ENCODE measurements at regions of chr3 and their contacts with region 1.

Region 1: DNA sequence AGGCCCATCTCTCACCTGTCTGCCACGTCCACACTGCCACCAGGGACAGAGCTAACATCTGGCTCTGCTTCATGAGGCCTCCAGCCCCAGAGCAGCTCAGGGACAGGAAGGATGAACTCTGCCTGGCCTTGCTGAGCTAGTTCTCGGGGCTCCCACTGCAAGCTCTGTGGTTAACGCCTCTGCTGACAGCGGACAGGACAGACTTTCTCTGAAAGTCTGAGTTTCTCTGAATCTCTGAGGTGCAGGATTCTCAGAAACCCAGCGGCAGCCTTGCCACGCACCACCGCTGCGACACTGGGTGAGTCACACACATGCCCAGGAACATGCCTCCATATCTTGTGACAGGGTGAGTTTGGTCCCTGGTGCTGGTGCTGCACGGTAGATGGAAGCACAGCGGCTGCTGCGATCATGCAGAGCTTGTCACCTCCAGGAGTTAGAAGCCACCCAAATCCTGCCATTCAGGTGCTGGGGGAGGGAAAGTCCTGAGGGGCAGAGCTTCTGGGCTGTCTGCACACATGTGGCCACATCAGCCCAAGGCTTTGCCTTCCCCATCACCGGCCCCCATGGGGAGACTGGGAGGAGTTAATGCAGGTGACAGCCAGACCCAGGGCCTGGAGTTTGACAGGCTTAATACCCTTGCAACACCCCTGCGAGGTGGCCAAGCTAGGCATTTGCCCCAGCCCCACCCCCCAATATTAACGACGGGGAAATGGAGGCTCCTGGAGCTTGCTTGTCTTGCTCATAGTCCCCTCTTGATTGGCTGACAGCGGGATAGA is 267.0 kb downstream of the PLCL2 start:
- DNase-seq: peak; percentile 27 to 81 (median 46)
- ATAC-seq: peak; percentile 87
- H3K4me3 ChIP-seq: peak overlapping the region; percentile 38
- H3K4me3 Mint-ChIP-seq: peak overlapping the region; percentile 38 to 86 (median 65)
- H3K27ac ChIP-seq: peak overlapping the region; percentile 45
- H3K27ac Mint-ChIP-seq: peak overlapping the region; percentile 41 to 95 (median 88)
- H3K4me1 ChIP-seq: peaks cover 18 to 33% of the 10 kb centered on the region in 2 donors
- H3K4me1 Mint-ChIP-seq: peaks cover 15 to 65% (median 28%) of the 10 kb centered on the region in 7 donors
- H3K27me3 ChIP-seq: no peaks in the 10 kb centered on the region
- H3K27me3 Mint-ChIP-seq: peaks cover 0 to 4% (median 0%) of the 10 kb centered on the region in 5 donors

Region 2: DNA sequence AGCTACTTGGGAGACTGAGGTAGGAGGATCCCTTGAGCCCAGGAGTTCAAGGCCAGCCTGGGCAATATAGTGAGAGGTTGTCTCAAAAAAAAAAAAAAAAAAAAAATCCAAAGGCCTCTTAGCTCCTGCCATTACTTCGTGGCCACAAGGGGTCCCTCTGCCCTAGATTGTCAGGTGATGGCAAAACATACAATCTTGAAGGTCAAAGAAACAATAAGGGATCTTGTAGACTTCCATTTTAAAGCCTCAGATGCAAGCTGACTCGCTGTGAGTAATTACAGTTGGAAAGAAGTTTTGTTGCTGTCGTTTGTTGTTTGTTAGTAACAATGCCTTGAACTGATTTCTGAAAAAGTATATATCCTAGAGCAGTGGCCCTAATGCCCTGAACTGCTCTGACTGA is 323.0 kb before region 1 on chr3:
- CTCF ChIA-PET with region 1: no interaction called
- POLR2A ChIA-PET with region 1: no interaction called
- intact Hi-C with region 1: loop called in 1 of 2 experiments (anchors 5 kb)
- DNase-seq: peak in 6 of 9 donors; percentile 29 to 59 (median 42)
- ATAC-seq: peak; percentile 80
- H3K4me3 ChIP-seq: no peak overlapping the region
- H3K4me3 Mint-ChIP-seq: no peak overlapping the region
- H3K27ac ChIP-seq: no peak overlapping the region
- H3K27ac Mint-ChIP-seq: peak overlapping the region in 3 of 9 donors; percentile 23 to 53 (median 42)
- H3K4me1 ChIP-seq: peaks cover 11 to 15% of the 10 kb centered on the region in 2 donors
- H3K4me1 Mint-ChIP-seq: peaks cover 16 to 37% (median 19%) of the 10 kb centered on the region in 7 donors
- H3K27me3 ChIP-seq: no peaks in the 10 kb centered on the region
- H3K27me3 Mint-ChIP-seq: peaks cover 0 to 20% (median 0%) of the 10 kb centered on the region in 5 donors

Region 3: GRCh38 chr3:17023006-17023664 is 128.7 kb before region 1 on chr3:
- CTCF ChIA-PET with region 1: no interaction called
- POLR2A ChIA-PET with region 1: no interaction called
- intact Hi-C with region 1: loop called in 1 of 2 experiments (anchors 2 kb)
- DNase-seq: peak in 4 of 9 donors; percentile 5 to 61 (median 34)
- ATAC-seq: peak; percentile 87
- H3K4me3 ChIP-seq: no peak overlapping the region
- H3K4me3 Mint-ChIP-seq: peak overlapping the region in 7 of 10 donors; percentile 27 to 72 (median 49)
- H3K27ac ChIP-seq: no peak overlapping the region
- H3K27ac Mint-ChIP-seq: peak overlapping the region; percentile 34 to 95 (median 79)
- H3K4me1 ChIP-seq: peaks cover 15 to 31% of the 10 kb centered on the region in 2 donors
- H3K4me1 Mint-ChIP-seq: peaks cover 34 to 87% (median 76%) of the 10 kb centered on the region in 7 donors
- H3K27me3 ChIP-seq: no peaks in the 10 kb centered on the region
- H3K27me3 Mint-ChIP-seq: no peaks in the 10 kb centered on the region

Region 4: DNA sequence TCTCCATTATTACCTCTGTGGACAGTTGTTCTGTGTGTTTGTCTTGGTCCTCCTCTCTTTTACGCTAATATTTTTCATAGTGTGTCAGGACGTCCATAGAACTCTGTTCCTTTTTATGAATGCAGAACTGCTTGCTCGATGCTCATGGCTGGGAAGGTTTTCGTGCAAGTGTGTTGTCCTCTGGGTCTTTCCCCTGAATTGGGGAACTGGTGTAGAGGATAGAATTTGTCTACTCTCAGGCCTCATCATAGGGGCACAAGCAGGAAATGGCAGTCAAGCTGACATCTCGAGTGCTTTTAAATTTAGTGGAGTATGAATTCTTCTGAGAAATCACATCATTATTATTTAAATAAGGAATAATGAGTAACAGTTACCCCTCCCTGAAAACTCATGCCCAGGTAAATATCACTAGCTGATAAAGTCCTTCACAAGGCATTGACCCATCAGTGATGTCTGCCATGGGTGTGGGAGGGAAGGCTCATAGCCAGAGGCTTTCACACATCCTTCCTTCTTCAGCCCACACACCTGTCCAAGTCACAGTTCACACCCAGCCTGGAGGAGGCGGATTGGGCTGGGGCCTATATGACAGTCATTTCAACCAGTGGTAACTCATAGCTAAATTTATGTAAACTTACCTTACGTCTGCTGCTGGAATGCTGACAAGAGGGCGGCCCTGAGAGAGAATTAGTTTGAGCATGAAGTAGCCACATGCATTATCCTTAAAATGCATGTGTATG is 41.0 kb before region 1 on chr3:
- CTCF ChIA-PET with region 1: interaction called, 3 read pairs
- POLR2A ChIA-PET with region 1: no interaction called
- intact Hi-C with region 1: loop called in 1 of 2 experiments (anchors 2 kb)
- DNase-seq: no peak
- ATAC-seq: no peak
- H3K4me3 ChIP-seq: no peak overlapping the region
- H3K4me3 Mint-ChIP-seq: no peak overlapping the region
- H3K27ac ChIP-seq: no peak overlapping the region
- H3K27ac Mint-ChIP-seq: peak overlapping the region in 1 of 9 donors; percentile 49
- H3K4me1 ChIP-seq: no peaks in the 10 kb centered on the region
- H3K4me1 Mint-ChIP-seq: peaks cover 0 to 11% (median 0%) of the 10 kb centered on the region in 7 donors
- H3K27me3 ChIP-seq: no peaks in the 10 kb centered on the region
- H3K27me3 Mint-ChIP-seq: no peaks in the 10 kb centered on the region

Region 5: GRCh38 chr3:17213102-17213501 is 61.3 kb after region 1 on chr3:
- CTCF ChIA-PET with region 1: no interaction called
- POLR2A ChIA-PET with region 1: no interaction called
- intact Hi-C with region 1: no loop called
- DNase-seq: no peak
- ATAC-seq: no peak
- H3K4me3 ChIP-seq: no peak overlapping the region
- H3K4me3 Mint-ChIP-seq: no peak overlapping the region
- H3K27ac ChIP-seq: no peak overlapping the region
- H3K27ac Mint-ChIP-seq: no peak overlapping the region
- H3K4me1 ChIP-seq: no peaks in the 10 kb centered on the region
- H3K4me1 Mint-ChIP-seq: peaks cover 0 to 2% (median 0%) of the 10 kb centered on the region in 7 donors
- H3K27me3 ChIP-seq: no peaks in the 10 kb centered on the region
- H3K27me3 Mint-ChIP-seq: no peaks in the 10 kb centered on the region

Region 6: GRCh38 chr3:17233398-17233800 is 81.6 kb after region 1 on chr3:
- CTCF ChIA-PET with region 1: no interaction called
- POLR2A ChIA-PET with region 1: no interaction called
- intact Hi-C with region 1: loop called in 1 of 2 experiments (anchors 1 kb)
- DNase-seq: peak in 8 of 9 donors; percentile 22 to 73 (median 58)
- ATAC-seq: peak; percentile 97
- H3K4me3 ChIP-seq: no peak overlapping the region
- H3K4me3 Mint-ChIP-seq: peak overlapping the region in 7 of 10 donors; percentile 2 to 56 (median 50)
- H3K27ac ChIP-seq: no peak overlapping the region
- H3K27ac Mint-ChIP-seq: peak overlapping the region in 5 of 9 donors; percentile 4 to 73 (median 31)
- H3K4me1 ChIP-seq: peaks cover 0 to 18% of the 10 kb centered on the region in 2 donors
- H3K4me1 Mint-ChIP-seq: peaks cover 5 to 30% (median 27%) of the 10 kb centered on the region in 7 donors
- H3K27me3 ChIP-seq: no peaks in the 10 kb centered on the region
- H3K27me3 Mint-ChIP-seq: no peaks in the 10 kb centered on the region

Measured in naive thymus-derived CD4-positive, alpha-beta T cell (primary cell).